PC-3 (cell line): ENCODE measurements at regions of chr1 and their contacts with region 1.

Region 1: GRCh38 chr1:24744911-24745710 is at the start of gene CLIC4:
- DNase-seq: peak; percentile 99
- ATAC-seq: peak; percentile 88
- H3K4me3 ChIP-seq: peak within 1 kb of the TSS; percentile 90
- H3K27ac ChIP-seq: peak within 1 kb of the TSS; percentile 33
- H3K4me1 ChIP-seq: peaks cover 21% of the 10 kb centered on the region
- H3K27me3 ChIP-seq: no peaks in the 10 kb centered on the region
- CTCF ChIP-seq: peak; percentile 15; the same call in 1 of the 2 replicates
- total RNA-seq, gene CLIC4: 51.4 and 57.6 TPM in 2 replicates

Region 2: GRCh38 chr1:24705260-24706073 is 39.6 kb before region 1 on chr1:
- CTCF ChIA-PET with region 1: interaction called, 3 read pairs
- POLR2A ChIA-PET with region 1: interaction called, 4 read pairs
- intact Hi-C with region 1: loop called (anchors 1 kb)
- DNase-seq: peak; percentile 98
- ATAC-seq: peak; percentile 98
- H3K4me3 ChIP-seq: peak overlapping the region; percentile 52
- H3K27ac ChIP-seq: peak overlapping the region; percentile 72
- H3K4me1 ChIP-seq: peaks cover 31% of the 10 kb centered on the region
- H3K27me3 ChIP-seq: no peaks in the 10 kb centered on the region
- CTCF ChIP-seq: no peak

Region 3: DNA sequence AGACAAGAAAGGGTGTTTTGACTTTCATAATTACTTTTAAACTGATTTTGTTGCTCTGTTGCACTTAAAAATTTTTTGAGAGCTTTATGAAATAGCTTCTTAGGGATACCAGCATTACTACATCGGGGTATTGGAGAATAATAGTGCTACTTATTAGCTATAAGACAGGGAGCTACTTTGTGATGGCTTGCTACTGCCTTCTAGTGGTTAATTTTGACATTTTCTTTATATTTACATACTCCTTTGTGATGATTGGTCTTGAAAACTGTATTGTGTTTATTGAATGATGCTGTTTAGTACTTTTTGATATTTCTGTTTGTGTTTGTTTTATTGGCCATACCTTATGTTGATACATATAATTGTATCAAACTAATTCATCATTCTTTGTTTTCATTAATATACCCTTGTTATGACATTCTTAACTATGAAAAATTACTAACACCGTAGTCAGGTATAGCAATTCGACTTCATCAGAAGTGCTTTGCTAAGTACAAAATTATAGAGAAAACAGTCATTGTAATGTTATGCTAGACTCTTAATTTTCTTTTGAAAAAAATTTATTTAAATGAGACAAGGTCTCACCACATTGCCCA is 85.7 kb after region 1 on chr1:
- CTCF ChIA-PET with region 1: interaction called, 9 read pairs
- POLR2A ChIA-PET with region 1: interaction called, 3 read pairs
- intact Hi-C with region 1: loop called (anchors 2 kb)
- DNase-seq: peak; percentile 86
- ATAC-seq: peak; percentile 83
- H3K4me3 ChIP-seq: no peak overlapping the region
- H3K27ac ChIP-seq: no peak overlapping the region
- H3K4me1 ChIP-seq: no peaks in the 10 kb centered on the region
- H3K27me3 ChIP-seq: no peaks in the 10 kb centered on the region
- CTCF ChIP-seq: peak; percentile 92